ENCODE measurements at regions of chr3 and their contacts with region 1.

Region 1: GRCh38 chr3:113088616-113089015 is 97.8 kb downstream of the GTPBP8 start:
- DNase-seq: no peak
- H3K4me3 ChIP-seq: no peak overlapping the region
- H3K27ac ChIP-seq: no peak overlapping the region
- H3K4me1 ChIP-seq: peaks cover 4% of the 10 kb centered on the region
- H3K27me3 ChIP-seq: no peaks in the 10 kb centered on the region
- CTCF ChIP-seq: no peak

Region 2: DNA sequence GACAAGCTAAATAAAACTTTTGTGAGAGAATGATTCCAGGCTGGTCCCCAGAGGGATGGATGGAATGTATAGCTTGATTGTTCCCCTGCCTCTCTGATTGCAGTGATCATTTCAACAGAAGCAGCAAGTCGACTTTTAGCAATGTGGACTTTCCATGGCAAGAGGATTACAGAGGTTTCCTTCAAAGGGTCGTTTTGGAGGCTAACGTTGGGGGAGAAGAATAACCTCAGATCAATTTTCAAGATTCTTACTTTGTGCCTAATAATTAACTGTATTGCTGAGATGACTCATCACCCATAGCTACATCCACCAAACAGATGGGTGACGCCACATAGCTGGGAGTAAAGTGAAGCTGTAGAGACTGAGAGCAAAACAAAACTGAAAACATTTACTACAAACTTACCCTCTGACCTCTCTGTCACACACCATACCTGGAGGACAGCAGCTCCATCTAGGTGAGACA is 17.9 kb before region 1 on chr3:
- CTCF ChIA-PET with region 1: no interaction called
- POLR2A ChIA-PET with region 1: no interaction called
- intact Hi-C with region 1: no loop called
- DNase-seq: no peak
- H3K4me3 ChIP-seq: no peak overlapping the region
- H3K27ac ChIP-seq: no peak overlapping the region
- H3K4me1 ChIP-seq: no peaks in the 10 kb centered on the region
- H3K27me3 ChIP-seq: no peaks in the 10 kb centered on the region
- CTCF ChIP-seq: no peak

Region 3: GRCh38 chr3:113132571-113132996 is 44.0 kb after region 1 on chr3:
- CTCF ChIA-PET with region 1: no interaction called
- POLR2A ChIA-PET with region 1: no interaction called
- intact Hi-C with region 1: no loop called
- DNase-seq: no peak
- H3K4me3 ChIP-seq: no peak overlapping the region
- H3K27ac ChIP-seq: no peak overlapping the region
- H3K4me1 ChIP-seq: no peaks in the 10 kb centered on the region
- H3K27me3 ChIP-seq: no peaks in the 10 kb centered on the region
- CTCF ChIP-seq: no peak

Region 4: GRCh38 chr3:113405180-113405579 is 316.6 kb after region 1 on chr3:
- CTCF ChIA-PET with region 1: interaction called, 10 read pairs
- POLR2A ChIA-PET with region 1: no interaction called
- intact Hi-C with region 1: no loop called
- DNase-seq: no peak
- H3K4me3 ChIP-seq: no peak overlapping the region
- H3K27ac ChIP-seq: no peak overlapping the region
- H3K4me1 ChIP-seq: no peaks in the 10 kb centered on the region
- H3K27me3 ChIP-seq: no peaks in the 10 kb centered on the region
- CTCF ChIP-seq: no peak

Measured in A673 (cell line).